Mammary epithelial cell (primary cell): ENCODE measurements at regions of chr12 and their contacts with region 1.

Region 1: DNA sequence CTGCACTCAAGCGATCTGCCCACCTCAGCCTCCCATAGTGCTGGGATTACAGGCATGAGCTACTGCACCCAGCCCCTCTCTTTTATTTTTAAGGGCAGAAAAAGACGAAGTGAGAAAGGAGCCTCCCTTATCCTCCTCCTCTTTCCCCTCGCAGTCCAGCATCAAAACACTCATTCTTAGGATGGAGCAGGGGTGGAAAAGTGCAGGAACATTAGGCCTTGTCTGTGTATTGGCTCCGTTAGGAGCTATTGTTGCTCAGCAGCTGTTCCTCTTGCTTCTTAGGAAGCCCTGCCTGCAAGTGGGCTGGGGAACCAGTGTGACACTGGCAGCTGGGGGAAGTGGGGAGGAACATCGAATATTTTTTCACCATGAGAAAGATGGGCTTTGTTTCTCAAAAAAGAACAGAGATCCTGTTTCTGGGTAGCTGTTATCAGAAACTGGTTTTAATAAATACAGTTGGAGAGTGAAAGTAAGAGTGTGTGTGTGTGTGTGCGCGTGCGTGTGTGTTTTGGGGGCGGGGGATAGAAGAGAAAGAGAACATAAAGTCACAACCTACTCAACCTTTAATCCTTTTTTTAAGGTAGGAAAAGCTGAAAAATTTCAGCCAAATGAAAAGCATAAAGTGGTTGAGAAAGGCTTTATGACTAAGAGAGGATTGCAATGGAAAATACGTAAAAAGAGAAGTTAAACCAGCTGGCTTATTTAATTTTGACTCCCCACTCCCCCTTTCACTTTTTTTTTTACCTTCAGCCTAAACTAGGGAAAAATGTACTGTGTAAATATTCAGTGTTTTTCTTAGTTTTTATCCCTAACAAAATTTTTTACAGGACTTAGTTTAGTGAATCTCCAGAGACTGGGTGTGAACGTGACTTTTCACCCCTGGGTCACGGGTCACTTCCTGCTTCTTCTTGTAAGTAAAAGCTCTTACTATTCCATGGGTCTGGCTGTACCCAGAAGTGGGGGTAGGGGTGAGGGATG is 197.2 kb upstream of the PLEKHG7 start:
- DNase-seq: no peak
- H3K4me3 ChIP-seq: no peak overlapping the region
- H3K27ac ChIP-seq: no peak overlapping the region
- H3K4me1 ChIP-seq: peaks cover 3% of the 10 kb centered on the region
- H3K27me3 ChIP-seq: no peaks in the 10 kb centered on the region
- CTCF ChIP-seq: no peak

Region 2: DNA sequence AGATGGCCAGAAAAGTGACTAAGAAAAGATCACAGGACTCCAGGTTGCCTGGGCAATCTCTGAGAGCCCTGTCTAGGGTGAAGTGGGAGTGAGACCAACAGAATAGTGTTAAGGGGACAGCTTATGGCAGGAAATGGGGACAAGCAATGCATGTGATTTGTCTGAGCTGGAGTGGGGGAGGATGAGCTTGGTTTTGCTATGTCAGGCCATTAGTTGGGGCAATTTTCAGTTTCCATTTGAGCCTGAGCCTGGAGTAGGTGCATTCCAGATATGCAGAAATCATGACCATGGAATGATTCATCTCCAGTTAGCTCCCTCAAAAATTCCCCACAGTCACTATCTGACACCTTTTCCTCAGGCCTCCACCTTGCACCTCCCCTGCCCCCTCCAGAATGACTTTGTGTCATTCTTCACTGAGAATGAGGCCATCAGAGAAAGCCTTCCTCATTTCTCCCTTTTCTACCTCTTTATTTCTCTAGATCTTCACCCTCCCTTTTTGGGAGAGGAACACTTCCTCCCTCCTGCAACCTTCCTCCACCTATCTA is 46.4 kb after region 1 on chr12:
- CTCF ChIA-PET with region 1: no interaction called
- dilution Hi-C with region 1: loop called (anchors 5 kb)
- in situ Hi-C with region 1: no loop called
- intact Hi-C with region 1: loop called (anchors 5 kb)
- DNase-seq: peak; percentile 97
- H3K4me3 ChIP-seq: no peak overlapping the region
- H3K27ac ChIP-seq: peak overlapping the region; percentile 82
- H3K4me1 ChIP-seq: peaks cover 38% of the 10 kb centered on the region
- H3K27me3 ChIP-seq: no peaks in the 10 kb centered on the region
- CTCF ChIP-seq: no peak